ENCODE measurements at regions of chr17 and their contacts with region 1.

Region 1: GRCh38 chr17:17994271-17995069 is 21.8 kb downstream of the DRC3 start:
- DNase-seq: peak; percentile 81
- ATAC-seq: peak; percentile 96
- H3K4me3 Mint-ChIP-seq: no peak overlapping the region
- H3K27ac Mint-ChIP-seq: no peak overlapping the region
- H3K4me1 Mint-ChIP-seq: no peaks in the 10 kb centered on the region
- H3K27me3 Mint-ChIP-seq: no peaks in the 10 kb centered on the region
- CTCF ChIP-seq: peak; percentile 42; the same call in 1 of the 2 replicates

Region 2: DNA sequence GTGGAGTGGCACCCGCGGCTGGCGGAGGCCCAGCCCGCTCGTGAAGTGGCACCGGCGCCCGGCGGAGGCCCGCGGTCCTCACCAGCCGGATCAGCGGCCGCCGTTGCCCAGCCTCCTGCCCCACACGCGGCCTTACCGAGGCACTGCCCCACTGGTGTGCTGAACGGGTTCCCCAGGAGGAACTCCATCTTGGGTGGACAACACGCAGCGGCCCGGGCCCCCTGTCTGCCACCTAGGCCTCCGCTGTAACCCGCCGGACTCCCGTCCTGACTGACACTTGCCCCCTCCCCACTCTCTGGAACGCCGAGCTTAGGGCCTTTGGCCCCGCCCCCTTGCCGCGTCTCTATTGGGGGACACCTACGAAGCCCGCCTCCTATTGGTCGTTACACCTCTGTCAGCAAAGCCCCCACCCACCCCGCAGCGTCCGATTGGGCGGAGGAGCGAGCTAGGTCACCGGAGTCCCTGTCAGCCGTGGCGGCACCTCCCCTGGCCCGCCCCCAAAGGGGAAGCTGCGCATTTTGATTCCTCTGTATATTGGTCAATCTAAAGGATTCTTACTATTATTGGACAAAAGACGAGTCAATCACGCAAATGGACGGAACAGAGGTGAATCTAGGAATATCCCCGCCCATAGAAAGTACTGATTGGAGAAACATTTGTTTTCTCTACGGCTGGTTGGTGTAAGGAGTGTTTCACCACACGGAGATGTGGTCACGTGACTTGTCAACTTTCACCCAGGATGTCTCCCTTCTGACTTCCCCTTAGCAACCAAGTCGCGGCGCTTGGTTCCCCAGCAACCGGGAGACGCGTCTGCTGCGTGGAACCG is 22.1 kb before region 1 on chr17 and contains the starts of genes DRC3 and TOM1L2:
- CTCF ChIA-PET with region 1: interaction called, 15 read pairs
- POLR2A ChIA-PET with region 1: no interaction called
- DNase-seq: peak; percentile 100
- ATAC-seq: peak; percentile 97
- H3K4me3 Mint-ChIP-seq: peak within 1 kb of the TSS; percentile 91
- H3K27ac Mint-ChIP-seq: no peak within 1 kb of the TSS; the same call in 1 of the 2 replicates
- H3K4me1 Mint-ChIP-seq: 0 out of 2 replicates have a peak, but pooled peaks cover 6% of the 10 kb centered on the region
- H3K27me3 Mint-ChIP-seq: no peaks in the 10 kb centered on the region; the same call in 1 of the 2 replicates
- CTCF ChIP-seq: no peak
- total RNA-seq, gene DRC3: 0.34 to 0.48 TPM (median 0.42 TPM) in 3 replicates
- total RNA-seq, gene TOM1L2: 5.2 to 6.7 TPM (median 6.4 TPM) in 3 replicates

Region 3: DNA sequence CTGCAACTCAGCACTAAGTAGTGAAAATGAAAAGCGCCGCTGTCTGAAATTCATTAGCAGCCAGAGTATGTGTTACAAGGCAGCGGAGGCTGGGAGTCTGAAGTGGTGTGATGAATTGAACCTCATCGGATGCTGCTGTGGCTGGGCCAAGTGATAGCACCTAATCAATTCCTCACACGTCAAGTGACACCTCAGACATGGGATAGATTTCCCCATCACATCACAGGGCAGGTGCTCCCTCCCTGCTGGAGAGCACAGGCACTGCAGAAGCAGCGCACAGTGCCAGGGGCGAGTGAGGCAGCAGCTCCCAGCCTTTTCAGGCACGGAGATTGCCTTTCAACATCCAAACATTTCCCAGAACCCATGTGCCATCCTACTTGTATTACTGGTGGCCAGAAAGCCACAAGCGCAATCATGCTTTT is 10.4 kb after region 1 on chr17:
- CTCF ChIA-PET with region 1: interaction called, 50 read pairs
- POLR2A ChIA-PET with region 1: no interaction called
- DNase-seq: peak; percentile 47
- ATAC-seq: peak; percentile 84
- H3K4me3 Mint-ChIP-seq: no peak overlapping the region
- H3K27ac Mint-ChIP-seq: 0 out of 2 replicates have a peak overlapping the region, but pooled peaks have one; percentile 63
- H3K4me1 Mint-ChIP-seq: peaks cover 4% of the 10 kb centered on the region; the same call in 1 of the 2 replicates
- H3K27me3 Mint-ChIP-seq: no peaks in the 10 kb centered on the region
- CTCF ChIP-seq: 0 out of 2 replicates have a peak, but pooled peaks have one; percentile 30

Region 4: DNA sequence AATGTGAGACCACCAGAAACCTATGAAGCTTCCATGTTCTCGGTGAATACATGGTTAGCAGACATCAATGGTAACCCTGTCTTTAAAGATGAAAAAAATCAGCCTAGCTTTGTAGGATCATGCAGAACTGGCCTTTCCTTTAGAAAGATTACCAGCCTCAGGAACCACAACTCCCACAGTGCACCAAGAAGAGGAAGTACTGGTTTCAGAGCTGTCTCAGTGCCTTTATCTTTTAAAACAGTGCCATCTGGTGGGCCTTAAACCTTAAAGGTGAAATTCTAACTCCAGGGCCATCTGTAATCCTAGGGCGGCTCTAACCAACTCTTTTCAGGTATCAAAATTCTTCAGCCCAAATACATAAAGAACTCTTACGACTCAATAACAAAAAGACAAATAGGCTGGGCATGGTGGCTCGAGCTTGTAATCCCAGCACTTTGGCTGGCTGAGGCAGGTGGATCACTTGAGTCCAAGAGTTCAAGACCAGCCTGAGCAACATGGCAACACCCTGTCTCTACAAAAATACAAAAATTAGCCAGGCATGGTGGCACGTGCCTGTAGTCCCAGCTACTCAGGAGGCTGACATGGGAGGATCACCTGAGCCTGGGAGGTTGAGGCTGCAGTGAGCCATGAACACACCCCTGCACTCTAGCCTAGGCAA is 39.1 kb after region 1 on chr17:
- CTCF ChIA-PET with region 1: interaction called, 32 read pairs
- POLR2A ChIA-PET with region 1: no interaction called
- DNase-seq: no peak
- ATAC-seq: peak; percentile 95
- H3K4me3 Mint-ChIP-seq: no peak overlapping the region
- H3K27ac Mint-ChIP-seq: no peak overlapping the region
- H3K4me1 Mint-ChIP-seq: peaks cover 11% of the 10 kb centered on the region
- H3K27me3 Mint-ChIP-seq: no peaks in the 10 kb centered on the region
- CTCF ChIP-seq: peak; percentile 39; the same call in 1 of the 2 replicates

Region 5: DNA sequence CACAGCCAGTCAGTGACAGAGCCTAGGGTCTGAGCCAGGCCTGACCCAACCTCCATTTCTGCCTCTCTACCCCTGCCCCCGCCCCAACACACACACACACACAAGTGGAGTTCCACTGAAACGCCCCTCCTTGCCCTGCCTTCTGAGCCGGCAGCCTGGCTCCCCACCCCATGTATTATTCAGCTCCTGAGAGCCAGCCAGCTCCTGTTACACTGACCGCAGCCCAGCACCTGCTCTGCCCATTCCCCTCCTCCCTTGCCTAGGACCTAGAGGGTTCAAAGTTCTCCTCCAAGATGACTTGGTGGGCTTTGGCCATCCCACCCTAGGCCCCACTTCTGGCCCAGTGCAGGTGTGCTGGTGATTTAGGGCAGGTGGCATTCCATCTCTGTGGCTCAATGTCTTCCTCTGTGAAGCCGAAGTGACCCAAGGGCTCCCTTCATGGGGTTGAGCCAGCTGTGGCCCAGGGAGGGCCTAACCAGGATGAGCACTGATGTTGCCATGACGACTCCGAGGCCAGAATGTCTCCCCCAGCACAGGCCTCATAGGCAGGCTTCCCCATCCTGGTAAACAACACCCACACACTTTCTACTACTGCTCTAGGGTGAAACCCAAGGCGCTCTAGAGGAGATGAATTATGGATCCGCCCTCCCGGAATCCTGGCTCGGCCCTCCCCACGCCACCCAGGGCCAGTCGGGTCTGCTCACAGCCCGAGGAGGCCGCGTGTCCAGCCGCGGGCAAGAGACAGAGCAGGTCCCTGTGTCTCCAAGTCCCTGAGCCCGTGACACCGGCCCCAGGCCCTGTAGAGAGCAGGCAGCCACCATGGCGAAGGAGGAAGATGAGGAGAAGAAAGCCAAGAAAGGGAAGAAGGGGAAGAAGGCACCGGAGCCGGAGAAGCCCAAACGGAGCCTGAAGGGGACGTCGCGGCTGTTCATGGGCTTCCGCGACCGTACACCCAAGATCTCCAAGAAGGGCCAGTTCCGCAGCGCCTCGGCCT is 123.8 kb after region 1 on chr17:
- CTCF ChIA-PET with region 1: no interaction called
- POLR2A ChIA-PET with region 1: no interaction called
- DNase-seq: no peak
- ATAC-seq: no peak
- H3K4me3 Mint-ChIP-seq: no peak overlapping the region
- H3K27ac Mint-ChIP-seq: no peak overlapping the region
- H3K4me1 Mint-ChIP-seq: no peaks in the 10 kb centered on the region
- H3K27me3 Mint-ChIP-seq: no peaks in the 10 kb centered on the region
- CTCF ChIP-seq: no peak

Measured in WTC11 (cell line).